HEK293T (cell line): ENCODE measurements at regions of chrX and their contacts with region 1.

Region 1: DNA sequence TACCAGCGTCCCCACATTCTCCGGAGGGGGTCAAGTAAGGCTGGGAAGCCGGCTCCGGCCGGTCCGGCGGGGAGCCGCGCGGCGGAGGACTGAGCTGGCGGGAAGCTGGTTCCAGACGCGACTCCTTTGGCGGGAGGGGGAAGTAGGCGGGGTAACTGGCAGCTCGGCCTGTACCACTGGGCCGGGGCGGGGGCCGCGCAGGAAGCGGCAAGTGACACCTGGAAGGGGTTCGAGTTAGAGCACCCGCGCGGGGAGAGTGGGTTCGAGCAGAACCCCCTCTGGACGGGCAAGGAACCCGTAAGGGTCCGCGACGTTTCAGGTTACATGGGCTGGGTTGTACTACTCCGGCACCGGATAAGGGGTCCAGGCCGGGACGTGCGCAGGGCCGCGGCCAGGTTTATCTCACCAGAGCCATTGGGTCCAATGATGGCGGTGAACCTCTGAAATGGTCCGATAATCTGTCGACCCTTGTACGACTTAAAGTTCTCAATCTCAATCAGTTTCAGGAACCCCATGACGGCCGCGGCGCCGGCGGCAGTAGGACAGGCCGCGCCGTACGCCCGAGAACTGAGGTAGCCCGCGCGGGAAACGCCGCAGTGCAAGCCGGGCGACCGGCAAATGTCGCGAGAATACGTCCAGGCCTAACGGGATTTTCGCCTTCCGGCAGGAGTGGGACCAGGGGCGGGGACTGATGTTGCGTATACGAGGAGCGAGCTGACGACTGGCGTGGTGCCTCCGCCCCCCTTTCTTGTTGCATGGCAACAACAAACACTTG is at the start of gene SMC1A:
- DNase-seq: peak; percentile 98

Region 2: DNA sequence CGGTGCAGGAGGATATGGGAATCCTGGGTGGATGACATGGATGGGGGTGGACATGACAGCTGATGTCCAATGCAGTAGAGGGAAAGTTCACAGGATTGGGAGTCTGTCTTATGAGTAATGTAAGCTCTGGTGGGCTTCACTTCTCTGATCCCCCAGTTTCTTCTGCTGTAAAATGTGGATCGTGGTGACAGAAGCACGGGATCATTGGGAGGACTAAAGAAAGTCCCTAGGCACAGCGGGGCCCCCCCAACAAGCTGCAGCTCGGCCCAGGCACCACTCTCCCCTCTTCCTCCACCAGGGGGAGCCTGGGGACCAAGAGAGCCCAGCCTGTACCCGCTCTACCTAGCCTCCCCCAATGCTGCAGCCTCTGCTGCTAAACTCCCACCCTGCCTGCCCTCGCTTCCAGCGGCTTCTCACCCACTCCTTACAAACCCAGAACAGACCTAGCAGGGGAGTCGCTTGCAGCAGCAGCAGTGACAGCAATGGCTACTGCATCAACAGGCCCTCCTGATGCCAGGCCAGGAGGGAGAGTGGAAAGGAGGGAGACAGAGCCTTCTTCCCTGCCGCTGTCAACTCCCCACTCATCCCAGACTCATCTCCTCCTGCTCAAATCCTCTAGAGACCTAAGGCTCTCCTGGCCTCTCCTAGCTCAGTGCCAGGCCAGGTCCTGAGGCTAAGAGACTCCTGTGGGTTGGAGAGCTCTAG is 104.8 kb before region 1 on chrX:
- CTCF ChIA-PET with region 1: interaction called, 6 read pairs
- POLR2A ChIA-PET with region 1: interaction called, 22 read pairs
- DNase-seq: peak; percentile 82

Region 3: DNA sequence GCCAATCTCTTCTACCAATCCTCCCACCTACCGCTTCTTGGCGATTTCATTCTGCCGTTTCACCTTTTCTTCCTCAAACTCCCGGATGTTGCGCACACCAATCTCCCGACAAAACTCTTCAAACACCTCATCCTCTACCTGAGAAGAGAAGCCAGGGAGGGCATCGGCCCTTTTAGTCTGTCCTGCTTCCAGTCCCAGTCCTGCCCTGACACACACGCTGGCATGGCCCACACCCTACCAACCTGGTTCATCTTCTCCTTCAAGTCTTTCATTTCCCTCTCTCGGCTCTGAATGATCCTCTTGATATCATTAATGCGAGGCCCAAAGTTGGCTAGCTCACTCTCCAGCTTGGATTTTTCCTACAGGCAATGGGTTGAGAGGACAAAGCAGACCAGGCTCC is 18.7 kb before region 1 on chrX:
- CTCF ChIA-PET with region 1: no interaction called
- POLR2A ChIA-PET with region 1: interaction called, 10 read pairs
- DNase-seq: no peak

Region 4: DNA sequence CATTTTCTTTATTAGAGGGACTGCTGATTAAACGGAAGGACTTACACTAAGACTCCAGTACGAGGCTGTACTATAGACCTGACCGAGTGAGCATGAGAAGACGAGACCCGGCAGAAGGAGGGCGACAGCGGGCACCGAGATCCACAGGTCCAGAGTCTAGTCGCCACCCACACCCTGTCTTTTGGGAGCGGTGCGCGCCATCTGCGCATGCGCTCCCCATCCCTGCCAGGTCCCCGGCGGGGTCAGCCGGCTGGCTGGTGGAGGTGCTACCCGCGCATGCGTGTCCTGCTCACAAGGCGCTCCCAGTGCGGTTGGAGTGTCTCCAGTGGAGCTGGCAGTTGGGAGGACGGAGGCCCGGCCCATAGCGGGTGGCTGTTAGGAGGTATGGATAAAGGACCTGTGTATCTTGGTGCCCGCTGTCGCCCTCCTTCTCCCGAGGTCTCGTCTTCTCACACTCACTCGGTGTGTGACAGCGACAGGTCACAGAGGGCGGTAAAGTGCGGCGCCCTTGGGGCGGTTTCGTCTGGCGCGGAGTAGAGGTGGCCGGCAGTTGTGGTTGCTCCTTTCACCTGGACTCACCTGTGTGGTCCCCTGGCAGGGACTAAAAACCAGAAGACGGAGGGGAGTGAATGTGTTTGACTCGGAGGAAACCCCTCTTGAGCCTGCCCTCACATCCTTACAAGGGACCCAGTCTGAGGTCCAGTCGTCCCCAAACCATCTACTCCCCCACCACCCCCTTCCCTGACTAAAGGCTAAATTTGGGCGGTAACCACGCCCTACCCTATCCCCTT is 19.5 kb after region 1 on chrX:
- CTCF ChIA-PET with region 1: interaction called, 8 read pairs
- POLR2A ChIA-PET with region 1: interaction called, 40 read pairs
- DNase-seq: peak; percentile 94